SK-N-SH (cell line): ENCODE measurements at regions of chr19 and their contacts with region 1.

Region 1: DNA sequence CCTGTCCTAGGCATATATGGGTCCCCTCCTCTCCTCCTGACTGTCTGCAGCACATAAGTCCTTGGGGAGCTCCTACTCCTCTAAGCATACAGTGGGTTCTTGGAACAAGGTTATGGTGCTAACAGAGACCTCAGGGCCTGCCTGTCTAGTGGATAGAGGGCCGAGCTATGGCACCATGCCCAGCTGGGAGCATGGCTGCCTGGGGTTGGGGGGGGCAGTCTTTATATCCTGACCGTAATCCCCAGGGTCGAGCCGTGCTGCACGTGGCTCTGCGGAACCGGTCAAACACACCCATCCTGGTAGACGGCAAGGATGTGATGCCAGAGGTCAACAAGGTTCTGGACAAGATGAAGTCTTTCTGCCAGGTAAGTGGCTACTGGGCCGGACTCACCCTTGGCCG is 3.3 kb downstream of the GPI start:
- DNase-seq: no peak
- H3K4me3 ChIP-seq: no peak overlapping the region
- H3K27ac ChIP-seq: no peak overlapping the region
- H3K4me1 ChIP-seq: peaks cover 10 to 11% of the 10 kb centered on the region in 2 experiments; a peak in 2 of 4 replicates
- H3K27me3 ChIP-seq: no peaks in the 10 kb centered on the region
- CTCF ChIP-seq: no peak
- EP300 ChIP-seq: no peak
- RAD21 ChIP-seq: no peak

Region 2: GRCh38 chr19:34430738-34431625 is 62.6 kb after region 1 on chr19:
- CTCF ChIA-PET with region 1: interaction called, 10 read pairs
- POLR2A ChIA-PET with region 1: no interaction called
- DNase-seq: peak; percentile 77
- H3K4me3 ChIP-seq: peak overlapping the region; percentile 24 to 79; a peak in 2 of 4 replicates
- H3K27ac ChIP-seq: no peak overlapping the region; a peak in 1 of 4 replicates
- H3K4me1 ChIP-seq: peaks cover 12% of the 10 kb centered on the region in 2 experiments; a peak in 3 of 4 replicates
- H3K27me3 ChIP-seq: no peaks in the 10 kb centered on the region
- CTCF ChIP-seq: peak; percentile 76
- EP300 ChIP-seq: no peak
- RAD21 ChIP-seq: peak; percentile 60